Sigmoid colon (tissue), 7 donors: ENCODE measurements at regions of chr5 and their contacts with region 1.

Region 1: GRCh38 chr5:13987843-13988464 is 43.5 kb upstream of the DNAH5 start:
- DNase-seq: peak; percentile 74
- H3K4me3 ChIP-seq: no peak overlapping the region
- H3K27ac ChIP-seq: no peak overlapping the region
- H3K4me1 ChIP-seq: peaks cover 0 to 3% (median 0%) of the 10 kb centered on the region in 4 donors
- H3K27me3 ChIP-seq: peaks cover 0 to 6% (median 0%) of the 10 kb centered on the region in 3 donors
- CTCF ChIP-seq: peak; percentile 56 to 80 (median 67)
- EP300 ChIP-seq: no peak
- POLR2A ChIP-seq: no peak

Region 2: GRCh38 chr5:14270209-14270702 is 282.3 kb after region 1 on chr5:
- intact Hi-C with region 1: loop called (anchors 5 kb)
- DNase-seq: no peak
- H3K4me3 ChIP-seq: no peak overlapping the region
- H3K27ac ChIP-seq: peak overlapping the region; percentile 58 to 82 (median 70)
- H3K4me1 ChIP-seq: peaks cover 0 to 72% (median 63%) of the 10 kb centered on the region in 4 donors
- H3K27me3 ChIP-seq: no peaks in the 10 kb centered on the region
- CTCF ChIP-seq: peak; percentile 67 to 87 (median 78)
- EP300 ChIP-seq: no peak
- POLR2A ChIP-seq: no peak

Region 3: GRCh38 chr5:14364576-14365472 is 376.9 kb after region 1 on chr5:
- intact Hi-C with region 1: loop called (anchors 5 kb)
- DNase-seq: no peak
- H3K4me3 ChIP-seq: no peak overlapping the region
- H3K27ac ChIP-seq: no peak overlapping the region
- H3K4me1 ChIP-seq: no peaks in the 10 kb centered on the region
- H3K27me3 ChIP-seq: no peaks in the 10 kb centered on the region
- CTCF ChIP-seq: peak in 3 of 4 experiments; percentile 20 to 40 (median 37)
- EP300 ChIP-seq: no peak
- POLR2A ChIP-seq: no peak

Region 4: DNA sequence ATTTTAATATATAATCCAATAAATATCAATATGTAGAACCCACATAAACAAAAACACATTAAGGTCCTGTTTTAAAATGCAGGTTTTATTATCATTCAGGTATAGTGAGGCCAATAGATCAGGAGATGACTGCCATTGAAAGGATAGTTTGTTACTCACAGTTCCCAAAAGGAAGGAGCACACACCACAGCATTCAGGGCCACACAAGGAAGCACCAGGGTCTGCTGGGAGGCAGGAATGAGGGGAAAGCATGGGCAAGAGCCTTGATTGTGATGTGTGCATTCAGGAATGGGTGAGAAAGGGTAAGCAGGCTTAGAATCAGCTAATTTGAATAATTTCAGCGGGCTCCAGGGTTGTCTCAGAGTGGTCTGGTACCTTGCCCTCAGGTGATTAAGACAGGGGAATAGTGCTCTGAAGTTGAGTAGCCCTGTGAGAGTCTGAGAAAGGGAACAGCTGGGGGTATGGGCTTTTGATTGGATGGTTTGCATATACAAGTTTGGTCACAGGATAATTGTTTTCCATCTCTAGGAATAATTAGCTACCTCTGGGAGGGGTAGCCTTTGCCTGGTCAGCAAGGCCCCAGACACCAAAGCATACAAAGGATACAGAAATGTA is 656.8 kb after region 1 on chr5:
- intact Hi-C with region 1: loop called (anchors 5 kb)
- DNase-seq: no peak
- H3K4me3 ChIP-seq: no peak overlapping the region
- H3K27ac ChIP-seq: no peak overlapping the region
- H3K4me1 ChIP-seq: no peaks in the 10 kb centered on the region
- H3K27me3 ChIP-seq: peaks cover 0 to 4% (median 0%) of the 10 kb centered on the region in 3 donors
- CTCF ChIP-seq: no peak
- EP300 ChIP-seq: no peak
- POLR2A ChIP-seq: no peak